ENCODE measurements at regions of chr1 and their contacts with region 1.

Region 1: GRCh38 chr1:182084487-182085316 is 23.2 kb upstream of the ZNF648 start:
- DNase-seq: peak; percentile 78
- H3K27ac ChIP-seq: peak overlapping the region; percentile 39
- CTCF ChIP-seq: peak; percentile 72

Region 2: GRCh38 chr1:181893937-181894336 is 190.8 kb before region 1 on chr1:
- CTCF ChIA-PET with region 1: no interaction called
- POLR2A ChIA-PET with region 1: no interaction called
- DNase-seq: no peak
- H3K27ac ChIP-seq: no peak overlapping the region
- CTCF ChIP-seq: no peak

Region 3: DNA sequence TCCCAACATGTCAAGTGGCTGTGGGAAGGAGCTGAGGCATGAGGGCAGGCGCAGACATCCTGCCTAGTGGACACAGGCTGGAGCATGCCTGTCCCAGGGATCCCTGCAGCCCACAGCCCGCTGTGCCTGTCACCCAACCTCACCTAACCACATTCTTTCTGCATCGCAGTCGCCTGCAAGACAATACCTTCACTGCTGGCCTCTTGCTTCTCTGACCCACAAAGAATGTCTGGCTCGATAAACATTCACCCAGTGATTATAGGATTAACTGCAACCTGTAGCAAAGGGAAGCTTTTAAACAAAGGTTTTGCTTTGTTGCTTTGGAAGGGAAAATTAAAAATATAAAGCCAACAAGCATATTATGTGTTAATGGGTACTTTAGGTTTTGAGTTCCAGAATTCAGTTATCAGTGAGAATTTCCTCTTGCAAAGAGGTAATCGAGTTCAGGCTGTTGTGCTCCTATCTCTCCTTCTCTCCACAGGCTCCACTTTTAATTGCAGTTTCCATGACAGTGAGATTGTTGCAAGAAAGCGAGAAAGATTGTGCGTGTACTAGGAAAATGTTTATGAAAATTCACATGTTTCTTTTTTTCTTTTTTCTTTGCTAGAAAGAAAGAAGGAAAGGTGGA is 16.8 kb after region 1 on chr1:
- CTCF ChIA-PET with region 1: no interaction called
- POLR2A ChIA-PET with region 1: no interaction called
- DNase-seq: peak; percentile 78
- H3K27ac ChIP-seq: no peak overlapping the region
- CTCF ChIP-seq: no peak

Region 4: DNA sequence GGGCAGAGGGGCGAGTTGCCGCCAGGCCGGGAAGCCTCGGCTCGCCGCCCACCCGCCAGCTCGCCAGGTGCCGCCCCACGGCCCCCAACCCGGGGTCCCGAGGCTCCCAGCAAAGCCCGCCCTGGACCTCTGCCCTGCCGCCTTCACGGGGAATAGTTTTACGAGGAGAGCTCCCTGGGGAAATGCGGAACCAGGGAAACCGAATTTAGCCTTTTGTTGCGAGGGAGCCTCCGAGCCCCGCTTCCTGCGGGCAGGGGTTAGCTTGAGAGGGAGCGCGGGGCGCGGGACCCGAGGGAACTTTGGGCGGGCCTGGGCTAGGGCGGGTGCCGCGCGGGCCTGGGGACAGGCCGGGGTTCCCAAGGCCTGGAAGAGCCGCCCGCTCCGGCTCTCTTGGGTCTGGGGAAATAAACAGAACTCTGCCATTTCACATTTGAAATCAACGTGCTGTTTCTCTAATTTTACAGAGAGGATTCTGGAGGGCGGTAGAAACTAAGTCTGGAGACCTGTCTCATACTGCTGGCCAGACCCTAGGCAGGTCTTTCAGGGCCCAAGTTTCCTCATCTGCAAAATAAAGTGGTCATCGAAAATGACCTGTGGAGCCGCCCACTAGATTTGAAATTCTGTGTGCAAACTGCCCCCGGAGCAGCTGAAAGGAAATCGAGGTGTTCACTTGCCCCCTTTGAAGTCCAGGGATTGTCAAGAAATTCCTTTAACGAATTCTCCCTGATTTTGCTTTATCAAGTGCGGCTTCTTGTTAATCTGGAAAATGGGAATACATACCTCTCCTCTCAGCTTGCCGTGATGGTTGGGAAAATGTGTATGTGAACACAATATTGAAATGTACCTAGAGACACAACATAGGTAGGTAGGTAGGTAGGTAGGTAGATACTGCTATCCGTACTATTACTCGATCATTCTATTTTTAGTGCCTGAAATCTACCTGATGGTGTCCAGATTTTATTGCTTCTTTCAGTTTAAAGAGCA is 307.6 kb after region 1 on chr1:
- CTCF ChIA-PET with region 1: interaction called, 13 read pairs
- POLR2A ChIA-PET with region 1: interaction called, 3 read pairs
- DNase-seq: peak; percentile 17
- H3K27ac ChIP-seq: peak overlapping the region; percentile 92
- CTCF ChIP-seq: no peak

Region 5: DNA sequence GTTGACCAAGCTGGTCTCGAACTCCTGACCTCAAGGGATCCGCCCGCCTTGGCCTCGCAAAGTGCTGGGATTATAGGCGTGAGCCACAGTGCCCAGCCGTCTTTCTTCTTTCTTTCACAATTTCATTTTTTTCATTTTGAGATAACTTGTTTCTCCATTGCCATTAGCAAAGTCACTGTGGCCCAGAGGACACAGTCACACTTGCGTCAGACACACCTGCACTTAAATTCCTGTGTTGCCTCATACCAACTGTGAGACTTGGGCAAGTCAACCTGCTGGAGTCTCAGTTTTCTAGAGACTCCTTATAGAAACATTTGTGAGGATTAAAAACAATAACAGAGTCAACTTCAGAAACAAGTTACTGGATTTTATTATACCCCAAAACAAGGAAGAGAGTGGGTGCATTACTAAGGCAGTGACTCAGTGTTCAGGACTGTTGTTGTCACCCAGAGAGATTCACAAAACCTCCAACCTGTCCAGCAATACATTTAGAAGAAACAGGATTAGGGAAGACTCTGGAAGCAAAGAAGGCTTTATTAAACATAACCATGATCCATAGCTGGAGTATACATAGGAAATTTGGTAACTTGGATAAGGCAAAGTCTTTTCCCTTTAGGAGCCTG is 313.2 kb after region 1 on chr1:
- CTCF ChIA-PET with region 1: interaction called, 13 read pairs
- POLR2A ChIA-PET with region 1: no interaction called
- DNase-seq: peak; percentile 16
- H3K27ac ChIP-seq: no peak overlapping the region
- CTCF ChIP-seq: no peak